MCF 10A (cell line): ENCODE measurements at regions of chr16 and their contacts with region 1.

Region 1: DNA sequence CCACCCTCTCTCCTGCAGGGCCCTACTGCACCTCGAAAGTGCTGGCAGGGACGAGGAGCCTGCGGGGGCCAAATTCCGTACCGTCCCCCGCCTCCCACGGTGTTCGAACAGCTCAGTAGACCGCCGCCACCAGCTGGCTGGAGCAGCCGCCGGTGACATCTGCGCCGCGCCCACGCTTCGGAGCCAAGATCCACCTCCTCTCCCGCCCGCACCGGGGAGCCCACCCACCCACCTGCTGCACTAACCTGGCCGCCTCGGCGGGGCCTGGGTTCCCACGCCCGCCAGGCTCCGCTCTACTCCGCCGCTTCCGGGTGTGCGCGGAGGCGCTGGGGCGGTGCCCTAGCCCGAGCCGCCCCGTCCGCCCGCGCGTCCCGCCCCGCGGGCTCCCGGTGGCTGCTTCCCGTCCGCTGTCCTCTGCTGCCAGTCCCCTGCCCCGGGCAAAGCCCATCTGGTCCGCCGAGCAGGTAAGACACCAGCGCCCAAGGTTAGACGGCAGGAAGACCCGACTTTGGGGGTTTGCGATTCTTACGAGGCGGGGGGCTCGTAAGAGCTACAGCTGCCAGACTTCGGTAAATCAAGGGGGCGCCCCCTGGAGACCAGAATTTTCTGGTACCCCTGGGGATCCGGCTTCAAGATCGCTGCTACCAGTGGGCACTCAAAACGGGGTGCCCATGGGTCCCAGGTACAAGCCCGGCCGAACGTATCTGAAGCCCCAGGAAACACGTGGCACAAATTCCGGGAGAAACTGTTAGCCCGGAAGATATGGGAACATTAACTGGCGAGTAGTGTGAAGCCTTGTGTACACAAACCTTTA is at the starts of genes FBXL8 and TRADD:
- DNase-seq: peak; percentile 70
- H3K4me3 Mint-ChIP-seq: peak within 1 kb of the TSS; percentile 84
- H3K27ac Mint-ChIP-seq: peak within 1 kb of the TSS; percentile 63
- H3K4me1 Mint-ChIP-seq: peaks cover 9% of the 10 kb centered on the region
- H3K27me3 Mint-ChIP-seq: no peaks in the 10 kb centered on the region
- CTCF ChIP-seq: peak; percentile 56
- total RNA-seq, gene FBXL8: 15.9 and 17.2 TPM in 2 replicates
- total RNA-seq, gene TRADD: 12.9 and 13.3 TPM in 2 replicates

Region 2: DNA sequence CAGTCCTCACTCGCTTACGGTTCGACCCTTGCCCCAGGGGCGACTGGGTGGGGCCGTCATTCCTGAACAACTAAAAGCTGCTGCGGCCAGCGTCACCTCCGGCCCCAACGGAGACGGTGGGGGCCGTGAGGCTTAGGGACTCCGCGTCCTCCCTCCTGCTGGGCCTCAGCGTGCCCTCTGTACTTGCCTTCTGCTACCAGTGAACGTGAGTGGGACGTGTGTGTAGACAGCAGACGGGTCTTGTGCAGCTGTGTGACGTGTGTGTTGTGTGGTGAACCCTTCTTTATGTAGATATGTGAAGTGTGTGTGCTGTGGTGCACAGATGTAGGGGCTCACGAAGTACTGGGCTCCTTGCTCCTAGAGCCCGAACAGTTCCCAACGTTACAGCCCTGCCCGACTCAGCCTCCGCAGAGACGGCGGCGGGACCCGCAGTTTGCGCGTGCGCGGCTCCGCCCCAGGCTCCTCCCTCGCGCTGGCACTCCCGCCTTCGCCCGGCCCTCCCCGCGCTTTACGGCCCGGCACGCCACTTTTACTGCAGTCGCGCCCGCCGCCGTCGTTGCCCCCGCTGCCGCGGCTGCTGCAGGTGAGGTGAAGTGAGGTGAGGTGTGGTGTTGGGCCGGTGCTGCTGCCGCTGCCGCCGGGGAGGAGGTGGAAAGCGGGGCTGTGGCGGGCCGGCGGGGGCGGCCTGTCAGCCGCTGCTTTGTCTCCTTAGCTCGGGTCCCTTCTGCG is 50.2 kb before region 1 on chr16 and contains the start of gene PHAF1:
- CTCF ChIA-PET with region 1: interaction called, 6 read pairs
- POLR2A ChIA-PET with region 1: interaction called, 10 read pairs
- intact Hi-C with region 1: no loop called
- DNase-seq: peak; percentile 88
- H3K4me3 Mint-ChIP-seq: peak within 1 kb of the TSS; percentile 82
- H3K27ac Mint-ChIP-seq: peak within 1 kb of the TSS; percentile 80
- H3K4me1 Mint-ChIP-seq: peaks cover 24% of the 10 kb centered on the region
- H3K27me3 Mint-ChIP-seq: no peaks in the 10 kb centered on the region
- CTCF ChIP-seq: no peak
- total RNA-seq, gene PHAF1: 13.8 and 14.5 TPM in 2 replicates

Region 3: DNA sequence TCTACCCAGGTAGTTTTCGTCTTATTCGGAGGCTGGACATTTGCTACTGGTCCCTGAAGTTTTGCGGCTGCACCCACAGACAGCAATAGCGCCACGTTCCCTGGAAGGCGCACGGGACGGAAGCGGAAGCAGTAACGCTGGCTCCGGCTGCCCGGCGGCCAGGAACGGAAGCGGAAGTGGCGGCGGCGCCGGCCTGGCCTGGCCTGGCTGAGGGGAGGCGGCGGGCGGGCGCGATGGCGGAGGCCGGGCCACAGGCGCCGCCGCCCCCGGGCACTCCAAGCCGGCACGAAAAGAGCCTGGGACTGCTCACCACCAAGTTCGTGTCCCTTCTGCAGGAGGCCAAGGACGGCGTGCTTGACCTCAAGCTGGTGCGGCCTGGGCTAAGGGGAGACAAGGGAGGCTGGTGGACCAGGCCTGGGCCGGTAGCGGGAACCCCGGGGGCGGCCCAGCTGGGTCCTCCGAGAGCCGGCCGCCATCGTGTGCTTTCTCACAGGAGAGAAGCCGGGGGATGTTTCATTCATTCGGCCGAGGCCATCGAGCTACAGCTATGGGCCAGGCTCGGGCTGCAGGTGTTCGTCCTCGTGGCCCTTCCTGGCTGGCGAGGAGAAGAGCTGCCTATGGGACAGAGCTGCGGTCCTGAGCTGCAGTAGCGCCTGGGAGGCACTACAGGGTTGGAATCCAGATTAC is 32.3 kb after region 1 on chr16 and contains the start of gene E2F4:
- CTCF ChIA-PET with region 1: interaction called, 4 read pairs
- POLR2A ChIA-PET with region 1: interaction called, 12 read pairs
- intact Hi-C with region 1: no loop called
- DNase-seq: peak; percentile 88
- H3K4me3 Mint-ChIP-seq: peak within 1 kb of the TSS; percentile 77
- H3K27ac Mint-ChIP-seq: peak within 1 kb of the TSS; percentile 78
- H3K4me1 Mint-ChIP-seq: peaks cover 22% of the 10 kb centered on the region
- H3K27me3 Mint-ChIP-seq: no peaks in the 10 kb centered on the region
- CTCF ChIP-seq: no peak
- total RNA-seq, gene E2F4: 81.0 and 85.5 TPM in 2 replicates